Right ventricle myocardium inferior (tissue), 1 donor: ENCODE measurements at regions of chr19 and their contacts with region 1.

Region 1: DNA sequence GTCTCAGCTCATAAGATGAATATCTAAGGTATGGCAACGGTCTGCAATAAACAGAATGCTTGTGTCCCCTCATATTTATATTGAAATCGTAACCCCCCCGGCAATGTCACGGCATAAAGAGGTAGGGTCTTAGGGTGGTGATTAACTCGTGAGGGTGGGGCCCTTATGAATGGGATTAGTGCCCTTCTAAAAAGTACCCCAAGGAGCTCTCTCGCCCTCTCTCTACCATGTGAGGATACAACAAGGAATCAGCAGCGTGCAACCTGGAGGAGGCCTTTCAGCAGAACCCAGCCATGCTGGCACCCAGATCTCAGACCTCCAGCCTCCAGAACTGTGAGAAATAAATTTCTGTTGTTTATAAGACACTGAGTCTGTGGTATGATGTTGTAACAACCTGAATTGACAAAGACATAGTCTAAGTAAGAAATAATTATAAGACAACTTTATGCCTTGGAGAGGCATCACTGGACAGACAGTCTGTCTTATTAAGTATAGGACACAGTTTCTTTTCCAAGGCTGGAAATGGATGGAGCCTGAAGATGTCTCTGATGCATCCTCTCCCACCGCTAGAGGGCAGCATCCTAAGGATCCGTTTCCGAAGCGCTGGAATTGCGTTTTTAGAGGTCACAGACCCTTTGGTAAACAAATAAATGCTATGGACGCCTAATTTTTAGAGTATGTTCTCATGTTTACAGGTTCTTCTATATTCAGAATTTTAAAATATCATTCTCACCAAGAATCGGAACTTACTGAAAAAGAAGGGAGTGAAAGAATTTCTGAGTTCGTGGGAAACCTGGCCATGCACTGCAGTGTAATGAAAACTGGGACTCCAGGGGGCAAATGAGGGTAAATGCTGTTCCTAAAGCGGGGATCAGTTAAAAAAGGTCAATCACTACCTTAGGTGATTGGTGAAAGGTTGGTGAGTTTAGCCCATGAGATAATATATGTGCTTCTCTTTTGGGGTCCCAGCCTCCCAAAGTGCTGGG is 13.3 kb upstream of the LEUTX start:
- DNase-seq: no peak
- ATAC-seq: no peak

Region 2: GRCh38 chr19:39554701-39555311 is 210.6 kb before region 1 on chr19:
- intact Hi-C with region 1: loop called (anchors 5 kb)
- DNase-seq: no peak
- ATAC-seq: no peak

Region 3: GRCh38 chr19:39590265-39590664 is 175.1 kb before region 1 on chr19:
- intact Hi-C with region 1: no loop called
- DNase-seq: no peak
- ATAC-seq: no peak